ENCODE measurements at regions of chr15 and their contacts with region 1.

Region 1: DNA sequence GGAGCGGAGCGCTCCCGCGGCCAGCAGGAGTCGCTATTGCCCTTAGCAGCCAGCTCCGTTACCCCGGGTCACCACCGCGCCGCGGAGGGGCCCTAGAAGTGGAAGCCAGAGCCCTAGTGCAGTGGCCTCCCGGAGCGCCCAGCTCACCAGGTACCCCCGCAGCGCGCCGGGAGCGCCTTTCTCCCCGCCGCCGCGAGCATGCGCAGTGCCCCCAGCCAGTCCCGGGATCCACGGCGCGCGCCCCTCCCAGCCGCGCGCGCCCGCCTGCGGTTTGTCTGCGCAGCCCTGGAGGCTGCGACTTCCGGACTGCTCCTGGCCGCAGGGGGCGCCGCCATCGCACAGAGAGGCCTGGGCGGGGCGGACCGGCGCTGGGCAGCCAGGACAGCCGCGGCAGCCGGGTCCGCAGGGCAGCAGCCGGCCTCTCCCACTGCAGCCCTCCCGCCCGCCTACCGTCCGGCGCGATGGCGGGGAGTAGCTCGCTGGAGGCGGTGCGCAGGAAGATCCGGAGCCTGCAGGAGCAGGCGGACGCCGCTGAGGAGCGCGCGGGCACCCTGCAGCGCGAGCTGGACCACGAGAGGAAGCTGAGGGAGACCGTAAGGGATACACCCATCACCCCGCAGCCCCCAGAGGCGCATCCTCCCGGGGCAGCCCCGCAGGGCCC is 5.7 kb downstream of the TPM1 start:
- DNase-seq: peak; percentile 75 to 90 (median 83)
- H3K4me3 ChIP-seq: peak overlapping the region; percentile 58 to 98 (median 90)
- H3K27ac ChIP-seq: peak overlapping the region in 58 of 59 donors; percentile 64 to 95 (median 87)
- H3K27me3 ChIP-seq: peaks cover 0 to 25% (median 4%) of the 10 kb centered on the region in 45 donors
- CTCF ChIP-seq: peak; percentile 74 to 97 (median 90)

Region 2: DNA sequence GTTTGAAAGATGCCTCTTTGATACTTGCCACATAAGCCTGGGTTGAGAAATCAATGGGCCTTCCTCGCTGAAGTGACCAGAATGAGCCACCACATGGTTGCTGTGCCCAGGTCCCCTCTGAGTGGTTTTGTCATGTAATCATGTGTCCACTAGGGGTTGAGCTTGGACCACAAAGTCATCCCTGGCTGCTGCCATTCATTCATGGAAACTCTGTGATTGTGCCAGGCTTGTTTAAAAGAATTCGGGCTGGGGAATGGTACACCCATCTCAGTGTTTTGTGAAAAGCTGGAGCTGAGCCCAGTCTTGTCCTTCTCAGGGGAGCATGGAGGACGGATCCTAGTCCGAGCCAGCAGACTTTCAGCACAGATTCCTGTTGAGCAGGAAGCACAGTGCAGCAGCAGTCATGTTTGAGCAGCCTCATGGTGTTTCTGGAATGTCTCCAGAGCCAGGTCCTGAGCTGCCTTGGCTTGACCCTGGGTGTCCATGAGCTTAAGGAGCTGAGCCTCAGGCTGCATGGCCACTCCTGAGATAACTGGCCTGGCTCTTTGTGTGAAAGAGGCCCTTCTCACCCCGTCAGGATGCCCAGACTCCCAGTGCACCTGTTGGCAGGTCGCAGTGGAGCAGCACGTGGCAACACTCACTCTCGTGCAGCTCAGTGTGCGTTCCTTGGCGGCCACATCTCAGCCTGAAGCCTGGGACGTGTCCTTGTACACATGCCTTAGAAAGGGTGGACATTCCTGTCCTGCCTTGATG is 266.0 kb before region 1 on chr15:
- intact Hi-C with region 1: loop called in 1 of 2 experiments (anchors 2 kb)
- DNase-seq: peak in 8 of 10 donors; percentile 51 to 73 (median 60)
- H3K4me3 ChIP-seq: no peak overlapping the region
- H3K27ac ChIP-seq: peak overlapping the region in 32 of 59 donors; percentile 3 to 74 (median 34)
- H3K27me3 ChIP-seq: no peaks in the 10 kb centered on the region
- CTCF ChIP-seq: peak; percentile 45 to 85 (median 74)

Region 3: DNA sequence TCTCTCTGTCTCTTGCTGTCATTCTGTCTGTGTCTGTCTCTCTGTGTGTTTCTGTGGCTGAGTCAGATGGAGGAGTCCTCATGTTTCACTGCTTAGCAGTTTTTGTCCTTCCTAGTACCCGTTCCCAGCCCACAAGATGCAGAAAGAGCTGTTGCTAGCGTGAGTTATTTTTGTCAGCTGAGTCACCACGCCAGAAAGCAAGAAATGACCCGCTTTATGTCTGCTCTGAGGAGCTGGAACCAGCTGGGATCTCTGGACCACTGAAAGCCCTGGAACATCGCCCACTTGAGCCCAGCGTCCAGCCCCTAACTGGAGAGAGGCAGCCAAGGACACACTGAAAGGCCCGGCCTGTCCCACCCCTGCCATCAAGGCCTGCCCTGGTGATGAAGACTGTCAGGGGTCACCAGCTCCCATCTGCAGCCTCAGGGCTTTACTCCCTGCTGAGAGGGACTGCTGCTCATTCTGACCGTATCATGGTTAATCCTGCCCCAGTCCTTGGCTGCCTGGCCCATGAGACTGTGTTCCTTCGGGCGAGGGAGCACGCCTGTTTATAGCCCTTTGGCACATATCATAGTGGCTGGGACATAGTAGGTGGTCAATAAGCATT is 107.4 kb before region 1 on chr15:
- intact Hi-C with region 1: loop called (anchors 5 kb)
- DNase-seq: peak; percentile 36 to 86 (median 72)
- H3K4me3 ChIP-seq: peak overlapping the region in 5 of 59 donors; percentile 7 to 29 (median 11)
- H3K27ac ChIP-seq: peak overlapping the region; percentile 17 to 95 (median 84)
- H3K27me3 ChIP-seq: no peaks in the 10 kb centered on the region
- CTCF ChIP-seq: peak in 1 of 56 donors; percentile 19

Region 4: GRCh38 chr15:62977952-62978811 is 70.1 kb before region 1 on chr15:
- intact Hi-C with region 1: no loop called
- DNase-seq: no peak
- H3K4me3 ChIP-seq: no peak overlapping the region
- H3K27ac ChIP-seq: no peak overlapping the region
- H3K27me3 ChIP-seq: no peaks in the 10 kb centered on the region
- CTCF ChIP-seq: no peak

Region 5: GRCh38 chr15:63093486-63094205 is 45.4 kb after region 1 on chr15:
- intact Hi-C with region 1: loop called (anchors 1 to 5 kb)
- DNase-seq: peak; percentile 59 to 86 (median 80)
- H3K4me3 ChIP-seq: no peak overlapping the region
- H3K27ac ChIP-seq: no peak overlapping the region
- H3K27me3 ChIP-seq: no peaks in the 10 kb centered on the region
- CTCF ChIP-seq: peak; percentile 50 to 98 (median 90)

Region 6: DNA sequence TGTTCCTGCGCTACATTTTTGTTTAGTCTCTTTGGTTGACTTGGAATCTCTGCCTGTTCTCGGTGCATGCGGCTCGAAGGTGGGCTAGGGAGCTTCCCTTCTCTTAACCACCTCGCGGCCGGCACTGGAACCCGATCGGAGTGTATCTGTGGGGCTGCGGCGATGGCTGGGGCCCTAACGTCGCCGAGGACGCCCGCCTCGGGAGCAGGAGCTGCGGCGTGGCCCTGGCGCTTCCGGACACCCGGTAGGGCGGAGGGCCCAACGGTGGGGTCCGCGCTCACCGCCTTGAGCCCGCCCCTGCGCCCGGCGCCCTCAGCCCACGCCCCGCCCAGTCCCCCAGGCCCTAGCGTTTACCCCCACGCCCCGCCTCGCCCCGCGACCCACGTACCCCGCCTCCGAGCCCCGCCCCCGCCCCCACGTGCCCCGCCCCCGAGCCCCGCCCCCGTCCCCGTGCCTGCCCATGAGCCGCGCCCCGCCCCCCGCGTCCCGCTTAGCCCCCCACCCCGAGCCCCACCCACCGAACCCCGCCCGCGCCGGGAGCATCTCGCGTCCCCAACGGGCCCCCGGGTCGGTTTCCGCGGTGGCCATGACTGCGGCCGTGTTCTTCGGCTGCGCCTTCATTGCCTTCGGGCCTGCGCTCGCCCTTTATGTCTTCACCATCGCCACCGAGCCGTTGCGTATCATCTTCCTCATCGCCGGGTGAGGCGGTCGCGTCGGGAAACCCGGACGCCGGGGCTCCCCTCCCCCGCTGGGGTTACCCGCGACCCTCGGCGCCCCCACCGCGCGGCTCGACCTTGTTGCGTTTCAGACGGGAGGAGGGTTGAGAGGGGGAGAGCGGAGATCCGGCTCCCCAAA is 229.0 kb after region 1 on chr15 and contains the start of gene APH1B:
- intact Hi-C with region 1: loop called in 1 of 2 experiments (anchors 10 kb)
- DNase-seq: peak; percentile 52 to 84 (median 75)
- H3K4me3 ChIP-seq: peak within 1 kb of the TSS; percentile 66 to 98 (median 90)
- H3K27ac ChIP-seq: peak within 1 kb of the TSS; percentile 60 to 97 (median 90)
- H3K27me3 ChIP-seq: no peaks in the 10 kb centered on the region
- CTCF ChIP-seq: peak in 3 of 56 donors; percentile 10 to 15 (median 13)
- total RNA-seq, gene APH1B: 12.8 to 48.9 (median 28.4) TPM

Measured in dorsolateral prefrontal cortex (tissue), 120 donors.